ENCODE measurements at regions of chr3 and their contacts with region 1.

Region 1: DNA sequence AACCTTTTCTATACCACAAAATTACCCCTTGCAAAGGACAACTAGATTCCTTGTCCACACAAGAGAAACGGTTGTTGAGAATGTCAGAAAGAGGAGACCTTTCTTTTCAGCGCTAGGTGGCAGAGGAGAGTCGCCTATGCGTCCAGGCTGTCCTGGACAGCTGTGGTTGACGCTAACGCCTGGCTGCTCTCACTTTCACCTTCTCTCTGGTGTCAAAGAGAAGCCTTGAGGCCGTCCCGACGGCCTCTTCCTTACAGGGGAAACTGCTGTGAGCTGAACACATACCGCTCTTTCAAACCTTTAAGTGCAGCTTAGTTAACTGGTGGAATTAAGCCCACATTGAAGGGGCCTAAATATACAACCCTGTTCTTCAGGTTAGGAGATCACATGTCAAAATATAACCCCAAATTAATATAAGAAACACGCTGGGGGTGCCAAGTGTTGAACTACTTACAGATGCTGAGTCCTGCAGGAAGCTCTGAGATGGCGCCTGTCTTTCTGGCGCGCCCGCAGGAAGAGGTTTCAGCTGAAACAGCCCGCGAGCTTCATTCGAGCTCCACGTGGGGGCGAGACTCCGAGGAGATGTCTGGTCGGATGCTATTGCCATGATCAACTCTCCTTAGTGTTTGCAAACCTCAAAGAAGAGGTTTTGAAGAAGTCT is 26.1 kb upstream of the KBTBD8 start:
- DNase-seq: peak; percentile 74
- ATAC-seq: peak; percentile 97 to 98
- H3K4me3 ChIP-seq: peak overlapping the region; percentile 45
- H3K27ac ChIP-seq: no peak overlapping the region
- H3K4me1 ChIP-seq: peaks cover 5% of the 10 kb centered on the region
- H3K27me3 ChIP-seq: no peaks in the 10 kb centered on the region
- CTCF ChIP-seq: peak; percentile 81

Region 2: DNA sequence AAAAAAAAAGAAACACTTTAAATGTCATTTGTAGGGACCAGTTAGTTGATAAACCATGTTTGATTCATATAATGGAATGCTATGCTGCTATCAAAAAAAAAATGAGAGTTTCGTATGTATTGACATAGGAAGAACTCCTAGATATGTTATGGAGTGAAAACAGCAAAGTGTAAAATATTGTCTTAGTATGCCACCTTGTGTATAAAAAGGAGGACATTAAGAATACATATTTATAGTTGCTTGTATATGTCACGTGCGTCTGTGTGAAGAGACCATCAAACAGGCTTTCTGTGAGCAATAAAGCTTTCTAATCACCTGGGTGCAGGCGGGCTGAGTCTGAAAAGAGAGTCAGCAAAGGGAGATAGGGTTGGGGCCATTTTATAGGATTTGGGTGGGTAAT is 65.6 kb after region 1 on chr3:
- intact Hi-C with region 1: loop called (anchors 10 kb)
- DNase-seq: no peak
- ATAC-seq: no peak
- H3K4me3 ChIP-seq: no peak overlapping the region
- H3K27ac ChIP-seq: no peak overlapping the region
- H3K4me1 ChIP-seq: no peaks in the 10 kb centered on the region
- H3K27me3 ChIP-seq: no peaks in the 10 kb centered on the region
- CTCF ChIP-seq: no peak

Region 3: GRCh38 chr3:67176396-67176795 is 204.4 kb after region 1 on chr3:
- intact Hi-C with region 1: no loop called
- DNase-seq: no peak
- ATAC-seq: no peak
- H3K4me3 ChIP-seq: no peak overlapping the region
- H3K27ac ChIP-seq: no peak overlapping the region
- H3K4me1 ChIP-seq: no peaks in the 10 kb centered on the region
- H3K27me3 ChIP-seq: no peaks in the 10 kb centered on the region
- CTCF ChIP-seq: no peak